Gastrocnemius medialis (tissue), 4 donors: ENCODE measurements at regions of chr1 and their contacts with region 1.

Region 1: GRCh38 chr1:52404116-52404986 is at the starts of genes ORC1 and PRPF38A:
- DNase-seq: peak; percentile 94 to 95
- ATAC-seq: peak; percentile 97 to 98
- H3K4me3 ChIP-seq: peak within 1 kb of the TSS; percentile 77 to 94 (median 86)
- H3K27ac ChIP-seq: peak within 1 kb of the TSS; percentile 86 to 91 (median 88)
- H3K4me1 ChIP-seq: peaks cover 25 to 26% of the 10 kb centered on the region in 2 donors
- H3K27me3 ChIP-seq: no peaks in the 10 kb centered on the region
- CTCF ChIP-seq: peak; percentile 41 to 60 (median 50)
- POLR2A ChIP-seq: peak; percentile 44 to 52
- total RNA-seq, gene ORC1: 0.29 to 2.6 (median 0.50) TPM
- total RNA-seq, gene PRPF38A: 3.0 to 8.2 (median 5.3) TPM

Region 2: GRCh38 chr1:52552505-52553361 is 148.4 kb after region 1 on chr1 and contains the start of gene TUT4:
- in situ Hi-C with region 1: no loop called
- intact Hi-C with region 1: loop called (anchors 5 kb)
- DNase-seq: peak; percentile 52 to 67
- ATAC-seq: peak; percentile 63 to 75
- H3K4me3 ChIP-seq: peak within 1 kb of the TSS; percentile 91 to 100 (median 96)
- H3K27ac ChIP-seq: peak within 1 kb of the TSS; percentile 97 to 99 (median 98)
- H3K4me1 ChIP-seq: peaks cover 34 to 35% of the 10 kb centered on the region in 2 donors
- H3K27me3 ChIP-seq: no peaks in the 10 kb centered on the region
- CTCF ChIP-seq: no peak
- POLR2A ChIP-seq: peak; percentile 51 to 53
- total RNA-seq, gene TUT4: 51.7 to 152 (median 67.5) TPM

Region 3: DNA sequence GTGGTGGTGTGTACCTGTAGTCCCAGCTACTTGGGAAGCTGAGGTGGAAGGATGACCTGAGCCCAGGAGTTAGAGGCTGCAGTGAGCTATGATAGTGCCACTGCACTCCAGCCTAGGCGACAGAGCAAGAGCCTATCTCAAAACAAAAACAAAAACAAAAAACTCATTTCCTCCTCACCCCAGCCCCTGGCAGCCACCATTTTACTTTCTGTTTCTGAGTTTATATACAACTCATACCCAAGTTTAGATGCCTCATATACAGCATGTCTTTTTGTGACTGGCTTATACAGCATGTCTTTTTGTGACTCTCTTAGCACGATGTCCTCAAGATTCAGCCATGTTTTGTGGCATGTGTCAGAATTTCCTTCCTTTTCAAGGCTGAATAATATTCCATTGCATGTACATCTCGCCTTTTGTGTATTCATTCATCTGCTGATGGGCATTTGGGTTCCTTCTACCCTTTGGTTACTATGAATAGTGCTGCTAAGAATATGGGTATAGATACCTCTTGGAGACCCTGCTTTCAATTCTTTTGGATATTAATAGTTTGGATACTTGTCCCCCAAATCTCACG is 279.1 kb after region 1 on chr1:
- in situ Hi-C with region 1: loop called in 3 of 4 experiments (anchors 25 kb)
- intact Hi-C with region 1: loop called (anchors 2 kb)
- DNase-seq: no peak
- ATAC-seq: no peak
- H3K4me3 ChIP-seq: no peak overlapping the region
- H3K27ac ChIP-seq: no peak overlapping the region
- H3K4me1 ChIP-seq: peaks cover 15 to 16% of the 10 kb centered on the region in 2 donors
- H3K27me3 ChIP-seq: no peaks in the 10 kb centered on the region
- CTCF ChIP-seq: no peak
- POLR2A ChIP-seq: no peak

Region 4: DNA sequence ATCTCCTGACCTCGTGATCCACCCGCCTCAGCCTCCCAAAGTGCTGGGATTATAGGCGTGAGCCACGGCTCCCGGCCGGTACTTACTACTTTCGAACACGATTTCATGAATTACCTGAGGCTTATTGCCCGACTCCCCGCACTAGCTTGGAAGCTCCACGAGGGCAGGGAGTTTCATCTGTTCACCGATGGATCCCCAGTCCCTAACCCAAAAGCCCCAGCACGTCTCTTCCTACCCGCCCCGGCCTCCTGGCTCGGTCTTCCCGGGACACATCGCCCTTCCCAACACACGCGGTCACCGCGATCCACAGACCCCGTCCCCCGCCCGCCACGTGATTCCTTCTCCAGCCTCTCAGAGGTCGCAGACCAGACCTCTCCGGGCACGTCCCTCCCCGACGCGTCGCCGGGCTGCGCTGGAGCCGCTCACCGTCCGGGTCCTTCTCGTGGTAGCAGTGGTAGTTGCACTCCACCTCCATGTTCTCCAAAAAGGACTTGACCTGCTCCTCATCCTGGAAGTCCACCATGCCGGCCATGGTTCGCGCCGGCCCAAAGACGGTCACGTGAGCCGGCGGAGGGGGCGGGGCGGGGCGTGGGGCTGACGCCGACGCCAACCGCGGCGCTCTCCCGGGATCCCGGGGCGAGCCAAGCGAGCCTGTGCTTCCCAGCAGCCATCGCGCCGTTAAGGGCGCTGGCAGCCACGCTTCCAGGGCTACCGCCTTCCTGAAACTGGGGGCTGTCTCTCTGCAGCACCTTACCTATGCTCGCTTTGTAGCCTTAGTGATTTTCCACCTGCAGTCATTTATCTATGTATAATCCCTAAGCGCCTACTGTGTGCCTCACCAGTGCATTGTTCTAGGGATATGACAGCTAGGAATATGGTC is 293.7 kb after region 1 on chr1 and contains the start of gene COA7:
- in situ Hi-C with region 1: loop called in 3 of 4 experiments (anchors 25 kb)
- intact Hi-C with region 1: no loop called
- DNase-seq: peak; percentile 73 to 85
- ATAC-seq: peak; percentile 71 to 76
- H3K4me3 ChIP-seq: peak within 1 kb of the TSS; percentile 73 to 96 (median 90)
- H3K27ac ChIP-seq: peak within 1 kb of the TSS; percentile 93 to 96 (median 95)
- H3K4me1 ChIP-seq: peaks cover 24 to 26% of the 10 kb centered on the region in 2 donors
- H3K27me3 ChIP-seq: no peaks in the 10 kb centered on the region
- CTCF ChIP-seq: peak in 1 of 5 experiments; percentile 18
- POLR2A ChIP-seq: peak; percentile 47 to 59
- total RNA-seq, gene COA7: 18.7 to 22.3 (median 20.1) TPM